Calu3 (cell line): ENCODE measurements at regions of chr1 and their contacts with region 1.

Region 1: GRCh38 chr1:147670317-147671041 is at the start of gene ACP6:
- DNase-seq: peak; percentile 97
- H3K4me3 Mint-ChIP-seq: peak within 1 kb of the TSS; percentile 94
- H3K27ac Mint-ChIP-seq: peak within 1 kb of the TSS; percentile 81
- H3K4me1 Mint-ChIP-seq: peaks cover 59% of the 10 kb centered on the region
- H3K27me3 Mint-ChIP-seq: no peaks in the 10 kb centered on the region
- CTCF ChIP-seq: no peak
- total RNA-seq, gene ACP6: 93.5 and 116 TPM in 2 replicates

Region 2: DNA sequence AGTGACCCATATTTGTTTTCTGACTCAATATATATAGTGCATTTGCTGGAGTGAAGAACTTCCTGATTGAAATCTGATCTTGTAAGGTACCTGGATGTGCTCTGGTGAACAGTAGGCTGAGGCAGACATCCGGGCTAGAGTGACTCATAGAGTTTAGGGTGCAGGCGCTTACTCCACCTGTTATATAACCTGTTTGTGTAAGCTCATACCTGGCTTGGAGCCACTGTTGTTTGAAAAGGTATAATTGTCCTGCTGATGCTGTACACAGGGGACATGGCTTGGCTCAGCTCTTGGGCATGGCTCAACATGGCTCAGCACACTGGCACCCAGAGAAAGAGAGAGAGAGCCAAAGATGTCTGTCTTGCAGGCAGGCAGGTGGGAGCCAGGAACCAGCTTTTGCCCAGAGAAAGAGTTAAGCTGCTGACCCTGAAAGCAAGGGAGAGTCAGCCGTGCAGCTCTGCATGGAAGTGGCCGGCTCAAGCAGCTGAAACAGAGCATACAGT is 46.6 kb after region 1 on chr1:
- CTCF ChIA-PET with region 1: interaction called, 10 read pairs
- intact Hi-C with region 1: no loop called
- DNase-seq: peak; percentile 89
- H3K4me3 Mint-ChIP-seq: peak overlapping the region; percentile 51
- H3K27ac Mint-ChIP-seq: peak overlapping the region; percentile 99
- H3K4me1 Mint-ChIP-seq: peaks cover 70% of the 10 kb centered on the region
- H3K27me3 Mint-ChIP-seq: no peaks in the 10 kb centered on the region
- CTCF ChIP-seq: no peak